HEK293T (cell line): ENCODE measurements at regions of chr17 and their contacts with region 1.

Region 1: GRCh38 chr17:42609182-42609813 is at the starts of genes RETREG3 and TUBG1:
- DNase-seq: peak; percentile 99

Region 2: GRCh38 chr17:42517516-42517915 is 91.8 kb before region 1 on chr17:
- CTCF ChIA-PET with region 1: no interaction called
- POLR2A ChIA-PET with region 1: no interaction called
- DNase-seq: peak; percentile 88

Region 3: DNA sequence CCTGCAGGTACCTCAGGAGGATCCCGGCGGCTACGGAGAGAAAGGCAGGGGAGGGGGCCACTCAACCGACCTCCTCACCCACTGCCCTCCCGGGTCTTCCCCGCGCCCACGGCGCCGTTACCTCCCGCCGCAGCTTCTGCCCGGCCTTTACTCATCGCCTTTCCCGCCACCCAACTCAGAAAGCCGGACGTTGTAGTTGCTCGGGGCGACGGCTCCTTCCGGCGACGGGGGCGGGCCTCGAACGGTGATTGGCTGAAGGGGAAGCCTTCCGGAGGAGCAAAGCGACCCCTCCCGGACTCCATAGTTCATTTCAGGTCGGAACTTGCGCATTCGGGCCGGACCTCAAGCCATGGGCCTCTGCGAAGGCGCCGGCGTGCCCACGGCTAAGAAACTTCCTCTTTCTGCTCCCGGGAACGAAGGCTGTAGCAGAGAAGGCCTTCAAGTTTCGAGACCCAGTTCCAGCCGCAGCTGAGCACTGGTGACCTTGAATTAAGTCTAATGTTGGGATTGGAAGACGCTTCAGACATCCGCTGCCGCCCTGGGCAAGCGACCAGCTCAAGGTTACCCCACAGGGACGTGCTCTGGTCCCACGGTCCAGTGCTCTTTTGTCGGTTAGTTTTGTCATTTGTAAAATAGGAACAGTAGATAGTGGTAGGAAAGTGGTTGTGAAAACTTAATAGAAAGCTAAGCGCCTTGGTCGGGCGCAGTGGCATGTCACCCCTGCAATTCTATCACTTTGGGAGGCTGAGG is 31.6 kb before region 1 on chr17 and contains the start of gene PSMC3IP:
- CTCF ChIA-PET with region 1: interaction called, 25 read pairs
- POLR2A ChIA-PET with region 1: interaction called, 34 read pairs
- DNase-seq: peak; percentile 96

Region 4: GRCh38 chr17:42598905-42599304 is 10.4 kb before region 1 on chr17:
- CTCF ChIA-PET with region 1: no interaction called
- POLR2A ChIA-PET with region 1: interaction called, 34 read pairs
- DNase-seq: no peak

Region 5: GRCh38 chr17:42653179-42654124 is 44.2 kb after region 1 on chr17:
- CTCF ChIA-PET with region 1: no interaction called
- POLR2A ChIA-PET with region 1: interaction called, 19 read pairs
- DNase-seq: peak; percentile 52

Region 6: GRCh38 chr17:42677008-42677857 is 67.9 kb after region 1 on chr17:
- CTCF ChIA-PET with region 1: interaction called, 6 read pairs
- POLR2A ChIA-PET with region 1: interaction called, 88 read pairs
- DNase-seq: peak; percentile 96